HEK293T (cell line): ENCODE measurements at regions of chr5 and their contacts with region 1.

Region 1: GRCh38 chr5:141825791-141826560 is 52.2 kb downstream of the PCDH1 start:
- DNase-seq: peak; percentile 54

Region 2: DNA sequence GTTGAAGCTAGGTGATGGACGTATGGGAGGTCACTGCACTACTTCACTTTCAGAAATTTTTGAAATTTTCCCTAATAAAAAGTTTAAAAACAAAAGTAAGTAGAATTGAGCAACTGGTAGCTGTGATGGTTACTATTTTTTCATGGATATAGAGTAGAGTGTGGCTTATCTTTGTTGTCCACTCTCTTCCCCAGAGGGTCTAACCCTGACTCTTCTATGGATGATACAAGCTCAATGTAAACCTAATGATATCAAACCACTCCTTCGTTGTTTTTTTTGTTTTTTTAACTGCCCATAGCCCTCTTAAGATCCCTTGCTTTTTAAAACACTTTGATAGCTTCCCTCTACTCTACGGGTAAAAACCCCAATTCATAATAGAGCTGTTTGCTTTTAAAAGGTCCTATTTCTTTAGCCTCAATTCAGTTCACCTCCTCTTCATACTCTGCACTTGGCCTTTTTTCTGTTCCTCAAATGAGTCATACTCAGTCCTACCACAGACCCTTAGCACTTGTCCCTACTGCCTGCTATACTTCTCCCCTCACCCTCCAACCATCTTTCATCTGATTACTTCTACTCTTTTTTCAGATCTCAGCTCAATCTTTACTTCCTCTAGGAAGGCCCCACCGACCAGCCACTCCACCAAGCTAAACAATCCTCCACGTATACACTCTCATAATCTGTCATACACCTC is 192.0 kb before region 1 on chr5:
- CTCF ChIA-PET with region 1: no interaction called
- POLR2A ChIA-PET with region 1: no interaction called
- DNase-seq: no peak

Region 3: DNA sequence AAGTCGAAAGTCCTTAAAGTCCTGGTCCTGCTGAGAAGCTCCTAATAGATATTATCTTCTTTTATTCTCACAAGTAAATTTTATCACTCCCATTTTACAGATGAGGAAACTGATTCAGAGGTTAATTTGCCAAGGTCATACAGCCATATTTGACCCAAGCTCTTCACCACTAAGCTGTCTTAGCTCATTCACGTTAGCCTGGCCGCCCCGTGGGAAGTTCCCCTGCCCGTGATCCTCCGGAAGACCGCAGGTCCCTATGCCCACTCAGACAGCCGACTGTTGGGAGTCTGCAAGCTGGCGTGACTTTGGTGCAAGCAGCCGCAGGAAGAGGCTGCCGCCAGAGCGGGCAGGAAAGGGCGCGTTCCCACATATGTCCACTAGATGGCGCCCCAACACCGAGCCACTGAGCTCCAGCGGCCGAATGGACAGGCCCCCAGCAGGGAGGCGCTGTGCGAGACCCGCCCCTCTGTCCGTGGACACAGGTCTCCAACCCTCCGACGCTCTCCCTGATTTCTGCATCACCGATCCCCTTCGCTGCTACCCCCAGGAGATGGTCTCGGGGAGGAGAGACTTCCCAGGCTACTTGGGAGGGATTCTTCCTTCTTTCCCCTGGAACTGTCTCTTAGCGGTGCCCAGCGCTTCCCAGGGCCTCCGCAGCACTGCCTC is 134.0 kb before region 1 on chr5:
- CTCF ChIA-PET with region 1: interaction called, 11 read pairs
- POLR2A ChIA-PET with region 1: no interaction called
- DNase-seq: peak; percentile 89

Region 4: GRCh38 chr5:141811287-141812155 is 14.5 kb before region 1 on chr5:
- CTCF ChIA-PET with region 1: interaction called, 32 read pairs
- POLR2A ChIA-PET with region 1: interaction called, 3 read pairs
- DNase-seq: peak; percentile 32